ENCODE measurements at regions of chr5 and their contacts with region 1.

Region 1: GRCh38 chr5:157471709-157472108 is 11.7 kb downstream of the NIPAL4 start:
- DNase-seq: peak; percentile 34
- ATAC-seq: peak; percentile 78
- H3K4me3 ChIP-seq: no peak overlapping the region
- H3K27ac ChIP-seq: no peak overlapping the region
- H3K4me1 ChIP-seq: no peaks in the 10 kb centered on the region; a peak in 1 of 4 replicates
- H3K27me3 ChIP-seq: no peaks in the 10 kb centered on the region
- CTCF ChIP-seq: peak; percentile 70 to 87 (median 79)
- POLR2A ChIP-seq: no peak
- RAD21 ChIP-seq: peak; percentile 64

Region 2: DNA sequence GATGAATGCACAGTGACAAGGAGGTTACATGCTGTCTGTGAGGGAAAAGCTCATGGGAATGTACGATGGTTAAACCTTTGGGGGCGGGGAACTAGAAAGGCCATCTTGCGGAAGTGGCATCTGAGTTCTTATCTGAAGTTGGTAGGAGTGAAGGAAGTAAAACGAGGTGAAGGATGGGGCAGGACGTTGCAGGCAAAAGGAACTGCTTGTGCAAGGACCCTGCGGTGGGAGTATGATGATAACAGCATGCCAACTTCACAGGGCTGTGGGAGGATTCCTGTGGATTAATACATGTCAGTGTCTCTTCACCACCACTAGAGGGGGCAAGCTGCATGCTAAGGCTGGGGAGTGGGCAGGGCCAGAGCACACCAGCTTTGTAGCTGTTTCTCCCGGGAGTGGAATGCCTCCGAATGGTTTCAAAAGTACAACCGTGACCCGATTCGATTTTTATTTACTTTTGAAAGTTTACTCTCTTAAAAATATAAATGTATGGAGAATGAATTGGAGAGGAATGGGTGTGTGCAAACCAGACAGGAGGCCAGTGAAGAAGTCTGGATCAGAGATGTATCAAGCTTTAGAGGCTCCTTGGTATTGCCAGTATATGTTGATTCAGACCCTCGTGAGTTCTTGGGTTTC is 143.3 kb before region 1 on chr5:
- CTCF ChIA-PET with region 1: interaction called, 18 read pairs
- POLR2A ChIA-PET with region 1: no interaction called
- RAD21 ChIA-PET with region 1: no interaction called
- intact Hi-C with region 1: no loop called
- DNase-seq: peak; percentile 58
- ATAC-seq: peak; percentile 98
- H3K4me3 ChIP-seq: 0 out of 4 replicates have a peak overlapping the region, but pooled peaks of 1 of the 2 experiments have one; percentile 12
- H3K27ac ChIP-seq: no peak overlapping the region
- H3K4me1 ChIP-seq: peaks cover 0 to 4% of the 10 kb centered on the region in 2 experiments; a peak in 1 of 4 replicates
- H3K27me3 ChIP-seq: no peaks in the 10 kb centered on the region
- CTCF ChIP-seq: peak; percentile 92 to 95 (median 92)
- POLR2A ChIP-seq: no peak
- RAD21 ChIP-seq: peak; percentile 91

Region 3: DNA sequence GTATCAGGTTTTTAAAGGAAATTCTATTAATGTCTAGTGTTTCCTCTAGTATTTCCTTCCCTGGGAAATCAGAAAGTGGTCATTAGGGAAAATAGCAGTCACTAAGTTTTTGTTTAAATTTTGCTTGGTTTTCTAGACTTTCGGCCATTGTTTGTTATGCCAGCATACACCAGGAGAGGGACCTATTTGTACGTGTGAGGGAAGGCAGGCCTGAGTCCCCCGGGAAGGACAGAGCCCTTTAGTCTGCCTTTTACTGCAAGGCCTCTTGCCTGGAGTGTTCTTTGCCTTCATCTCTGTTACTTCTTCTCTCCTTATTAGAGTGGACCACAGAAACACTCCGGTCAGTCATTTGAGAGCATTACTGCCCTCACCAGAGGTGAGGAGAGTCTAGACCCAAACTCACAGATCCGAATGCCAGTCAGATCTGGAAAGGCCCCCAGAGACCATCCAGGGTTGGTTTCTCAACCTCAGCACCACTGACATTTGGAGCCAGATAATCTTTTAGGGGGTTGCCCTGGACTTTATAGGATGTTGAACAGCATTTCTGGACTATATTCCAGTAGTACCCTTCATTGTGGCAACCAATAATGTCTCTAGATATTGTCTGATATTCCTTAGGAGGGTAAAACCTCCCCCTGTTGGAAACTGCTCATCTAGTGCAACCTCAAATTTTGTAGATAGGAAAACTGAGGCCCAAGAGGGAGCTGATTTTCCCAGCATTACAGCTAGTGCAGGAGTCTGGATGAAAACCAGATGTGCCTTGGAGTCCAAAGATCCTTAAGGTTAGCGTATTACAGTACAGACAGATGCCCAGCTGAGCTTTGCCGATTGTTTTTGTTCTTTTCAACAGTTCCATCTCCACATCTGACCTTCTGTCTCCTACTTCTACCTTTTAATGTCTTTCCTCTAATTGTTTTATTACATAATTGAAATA is 104.7 kb before region 1 on chr5:
- CTCF ChIA-PET with region 1: interaction called, 5 read pairs
- POLR2A ChIA-PET with region 1: no interaction called
- RAD21 ChIA-PET with region 1: no interaction called
- intact Hi-C with region 1: loop called (anchors 1 kb)
- DNase-seq: no peak
- ATAC-seq: peak; percentile 85
- H3K4me3 ChIP-seq: no peak overlapping the region
- H3K27ac ChIP-seq: no peak overlapping the region
- H3K4me1 ChIP-seq: no peaks in the 10 kb centered on the region
- H3K27me3 ChIP-seq: no peaks in the 10 kb centered on the region
- CTCF ChIP-seq: peak; percentile 62 to 82 (median 71)
- POLR2A ChIP-seq: no peak
- RAD21 ChIP-seq: peak; percentile 93